Aorta (tissue), 5 donors: ENCODE measurements at regions of chr13 and their contacts with region 1.

Region 1: DNA sequence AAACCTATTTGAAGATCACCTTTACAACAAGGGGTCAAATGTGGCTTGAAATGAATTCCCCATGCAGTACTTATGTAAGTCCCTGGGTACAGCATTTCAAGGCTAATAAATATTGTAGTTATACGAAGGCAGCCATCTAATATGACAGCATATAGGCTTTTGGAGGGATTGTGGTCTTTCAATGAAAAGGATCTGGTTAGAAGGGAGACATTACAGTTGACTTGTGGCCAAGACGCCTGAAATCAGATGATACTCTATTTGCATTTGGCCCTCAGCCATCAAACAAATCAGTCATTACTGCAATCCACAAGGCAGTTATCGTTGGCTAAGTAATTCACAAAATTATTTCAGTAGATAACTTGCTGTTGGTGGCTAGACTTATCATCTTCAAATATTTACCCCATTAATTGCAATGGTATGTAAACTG is 242.7 kb downstream of the DCLK1 start:
- DNase-seq: no peak
- ATAC-seq: no peak
- H3K4me3 ChIP-seq: no peak overlapping the region
- H3K27ac ChIP-seq: no peak overlapping the region
- H3K4me1 ChIP-seq: no peaks in the 10 kb centered on the region
- H3K27me3 ChIP-seq: no peaks in the 10 kb centered on the region

Region 2: GRCh38 chr13:35594096-35594495 is 294.4 kb before region 1 on chr13:
- intact Hi-C with region 1: no loop called
- DNase-seq: no peak
- ATAC-seq: no peak
- H3K4me3 ChIP-seq: no peak overlapping the region
- H3K27ac ChIP-seq: no peak overlapping the region
- H3K4me1 ChIP-seq: peaks cover 3 to 4% of the 10 kb centered on the region in 2 donors
- H3K27me3 ChIP-seq: no peaks in the 10 kb centered on the region

Region 3: DNA sequence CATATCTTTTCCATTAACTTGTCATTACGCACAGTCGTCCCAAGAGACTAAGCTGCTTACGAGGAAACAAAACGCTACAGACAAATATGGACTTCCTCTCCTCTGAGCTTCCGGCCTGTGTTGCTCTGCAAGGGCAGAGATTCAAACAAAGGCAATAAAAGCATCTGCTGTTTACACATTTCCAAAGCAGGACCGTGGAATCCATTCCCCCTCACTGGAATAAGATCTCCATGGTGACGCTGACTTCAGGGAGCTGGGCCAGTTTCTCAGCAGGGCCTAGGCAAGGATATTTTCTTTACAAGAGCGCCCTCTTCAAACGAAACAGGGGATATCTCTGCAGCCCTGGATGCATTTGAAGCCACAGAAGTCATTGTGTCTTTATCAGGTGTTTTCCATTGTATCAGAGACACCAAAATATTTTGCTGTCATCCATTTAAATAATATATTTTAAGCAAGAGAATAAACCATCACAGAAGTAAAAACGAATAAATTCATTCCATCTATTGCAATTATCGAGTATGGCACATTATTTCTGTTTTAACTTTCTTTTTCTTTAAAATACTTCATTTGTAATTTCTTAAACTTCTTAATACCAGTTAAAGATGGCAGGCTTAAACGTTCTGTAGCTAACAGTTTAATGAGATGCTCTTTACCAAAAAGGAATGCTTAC is 65.2 kb after region 1 on chr13:
- intact Hi-C with region 1: no loop called
- DNase-seq: peak; percentile 71 to 83
- ATAC-seq: peak; percentile 88
- H3K4me3 ChIP-seq: no peak overlapping the region
- H3K27ac ChIP-seq: no peak overlapping the region
- H3K4me1 ChIP-seq: peaks cover 0 to 5% of the 10 kb centered on the region in 2 donors
- H3K27me3 ChIP-seq: no peaks in the 10 kb centered on the region

Region 4: GRCh38 chr13:36057029-36057428 is 168.6 kb after region 1 on chr13:
- intact Hi-C with region 1: loop called in 1 of 2 experiments (anchors 10 kb)
- DNase-seq: no peak
- ATAC-seq: no peak
- H3K4me3 ChIP-seq: no peak overlapping the region
- H3K27ac ChIP-seq: no peak overlapping the region
- H3K4me1 ChIP-seq: peaks cover 2 to 3% of the 10 kb centered on the region in 2 donors
- H3K27me3 ChIP-seq: no peaks in the 10 kb centered on the region